Naive thymus-derived CD4-positive, alpha-beta T cell (primary cell): ENCODE measurements at regions of chr15 and their contacts with region 1.

Region 1: GRCh38 chr15:58628206-58628947 is 121.1 kb downstream of the ADAM10 start:
- DNase-seq: peak in 6 of 9 donors; percentile 14 to 44 (median 21)
- ATAC-seq: peak; percentile 70
- H3K4me3 ChIP-seq: peak overlapping the region; percentile 67
- H3K4me3 Mint-ChIP-seq: peak overlapping the region; percentile 64 to 92 (median 87)
- H3K27ac ChIP-seq: peak overlapping the region; percentile 86
- H3K27ac Mint-ChIP-seq: peak overlapping the region; percentile 92 to 100 (median 96)
- H3K4me1 ChIP-seq: peaks cover 19% of the 10 kb centered on the region in 2 donors
- H3K4me1 Mint-ChIP-seq: peaks cover 32 to 67% (median 58%) of the 10 kb centered on the region in 7 donors
- H3K27me3 ChIP-seq: no peaks in the 10 kb centered on the region
- H3K27me3 Mint-ChIP-seq: no peaks in the 10 kb centered on the region

Region 2: GRCh38 chr15:58269455-58270414 is 358.6 kb before region 1 on chr15:
- CTCF ChIA-PET with region 1: no interaction called
- POLR2A ChIA-PET with region 1: no interaction called
- intact Hi-C with region 1: loop called in 1 of 2 experiments (anchors 10 kb)
- DNase-seq: peak in 7 of 9 donors; percentile 13 to 56 (median 37)
- ATAC-seq: peak; percentile 81
- H3K4me3 ChIP-seq: no peak overlapping the region
- H3K4me3 Mint-ChIP-seq: no peak overlapping the region
- H3K27ac ChIP-seq: no peak overlapping the region
- H3K27ac Mint-ChIP-seq: peak overlapping the region in 5 of 9 donors; percentile 10 to 78 (median 52)
- H3K4me1 ChIP-seq: peaks cover 0 to 5% of the 10 kb centered on the region in 2 donors
- H3K4me1 Mint-ChIP-seq: peaks cover 6 to 14% (median 13%) of the 10 kb centered on the region in 7 donors
- H3K27me3 ChIP-seq: no peaks in the 10 kb centered on the region
- H3K27me3 Mint-ChIP-seq: peaks cover 0 to 6% (median 0%) of the 10 kb centered on the region in 5 donors

Region 3: GRCh38 chr15:58457381-58457965 is 170.9 kb before region 1 on chr15:
- CTCF ChIA-PET with region 1: no interaction called
- POLR2A ChIA-PET with region 1: no interaction called
- intact Hi-C with region 1: loop called in 1 of 2 experiments (anchors 5 kb)
- DNase-seq: no peak
- ATAC-seq: no peak
- H3K4me3 ChIP-seq: no peak overlapping the region
- H3K4me3 Mint-ChIP-seq: peak overlapping the region in 1 of 10 donors; percentile 47
- H3K27ac ChIP-seq: no peak overlapping the region
- H3K27ac Mint-ChIP-seq: peak overlapping the region in 2 of 9 donors; percentile 16 to 78
- H3K4me1 ChIP-seq: peaks cover 11 to 23% of the 10 kb centered on the region in 2 donors
- H3K4me1 Mint-ChIP-seq: peaks cover 19 to 75% (median 49%) of the 10 kb centered on the region in 7 donors
- H3K27me3 ChIP-seq: no peaks in the 10 kb centered on the region
- H3K27me3 Mint-ChIP-seq: no peaks in the 10 kb centered on the region

Region 4: GRCh38 chr15:58611731-58612676 is 16.4 kb before region 1 on chr15:
- CTCF ChIA-PET with region 1: no interaction called
- POLR2A ChIA-PET with region 1: no interaction called
- intact Hi-C with region 1: loop called in 1 of 2 experiments (anchors 2 kb)
- DNase-seq: no peak
- ATAC-seq: no peak
- H3K4me3 ChIP-seq: no peak overlapping the region
- H3K4me3 Mint-ChIP-seq: no peak overlapping the region
- H3K27ac ChIP-seq: no peak overlapping the region
- H3K27ac Mint-ChIP-seq: peak overlapping the region in 1 of 9 donors; percentile 53
- H3K4me1 ChIP-seq: no peaks in the 10 kb centered on the region
- H3K4me1 Mint-ChIP-seq: peaks cover 9 to 67% (median 29%) of the 10 kb centered on the region in 7 donors
- H3K27me3 ChIP-seq: no peaks in the 10 kb centered on the region
- H3K27me3 Mint-ChIP-seq: no peaks in the 10 kb centered on the region

Region 5: GRCh38 chr15:58641660-58642059 is 13.3 kb after region 1 on chr15:
- CTCF ChIA-PET with region 1: no interaction called
- POLR2A ChIA-PET with region 1: interaction called, 5 read pairs
- intact Hi-C with region 1: loop called in 1 of 2 experiments (anchors 2 kb)
- DNase-seq: no peak
- ATAC-seq: no peak
- H3K4me3 ChIP-seq: no peak overlapping the region
- H3K4me3 Mint-ChIP-seq: no peak overlapping the region
- H3K27ac ChIP-seq: no peak overlapping the region
- H3K27ac Mint-ChIP-seq: peak overlapping the region in 7 of 9 donors; percentile 24 to 78 (median 53)
- H3K4me1 ChIP-seq: no peaks in the 10 kb centered on the region
- H3K4me1 Mint-ChIP-seq: peaks cover 7 to 19% (median 17%) of the 10 kb centered on the region in 7 donors
- H3K27me3 ChIP-seq: no peaks in the 10 kb centered on the region
- H3K27me3 Mint-ChIP-seq: no peaks in the 10 kb centered on the region

Region 6: DNA sequence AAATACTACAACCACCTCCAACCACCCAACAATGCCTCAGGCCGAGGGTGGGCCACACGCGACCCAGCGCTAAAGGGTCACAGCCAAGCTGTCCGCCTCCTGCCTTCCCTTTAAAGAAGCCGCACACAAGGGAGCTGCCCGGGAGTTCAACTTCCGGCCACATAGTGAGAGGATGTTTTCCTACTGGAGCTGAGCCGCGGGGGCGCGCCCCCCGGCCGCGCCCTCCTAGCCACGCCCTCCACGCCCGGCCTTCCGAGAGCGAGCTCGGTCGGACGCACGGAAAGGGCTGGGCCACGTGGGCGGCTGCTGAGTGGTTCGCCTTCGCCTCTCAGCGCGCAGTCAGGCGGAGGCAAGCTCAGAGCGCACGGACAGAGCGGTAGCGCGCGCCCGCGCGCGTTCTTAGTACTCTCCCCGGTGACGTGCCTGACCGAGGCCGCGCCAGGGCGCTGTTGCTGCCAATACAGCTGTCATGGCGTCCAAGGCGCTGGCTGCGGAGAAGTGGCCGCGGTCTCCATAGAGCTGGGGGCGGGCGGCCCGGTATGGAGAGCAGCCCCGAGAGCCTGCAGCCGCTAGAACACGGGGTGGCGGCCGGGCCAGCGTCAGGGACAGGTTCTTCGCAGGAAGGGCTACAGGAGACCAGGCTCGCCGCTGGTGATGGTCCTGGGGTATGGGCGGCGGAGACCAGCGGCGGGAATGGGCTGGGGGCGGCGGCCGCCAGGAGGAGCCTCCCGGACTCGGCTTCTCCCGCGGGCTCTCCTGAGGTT is 142.7 kb after region 1 on chr15 and contains the start of gene MINDY2:
- CTCF ChIA-PET with region 1: no interaction called
- POLR2A ChIA-PET with region 1: interaction called, 3 read pairs
- intact Hi-C with region 1: loop called in 1 of 2 experiments (anchors 1 kb)
- DNase-seq: peak; percentile 85 to 92 (median 90)
- ATAC-seq: peak; percentile 98
- H3K4me3 ChIP-seq: peak within 1 kb of the TSS; percentile 83
- H3K4me3 Mint-ChIP-seq: peak within 1 kb of the TSS in 2 of 10 donors; percentile 2 to 20
- H3K27ac ChIP-seq: peak within 1 kb of the TSS; percentile 90
- H3K27ac Mint-ChIP-seq: peak within 1 kb of the TSS in 7 of 9 donors; percentile 86 to 96 (median 93)
- H3K4me1 ChIP-seq: peaks cover 24 to 32% of the 10 kb centered on the region in 2 donors
- H3K4me1 Mint-ChIP-seq: peaks cover 0 to 21% (median 9%) of the 10 kb centered on the region in 7 donors
- H3K27me3 ChIP-seq: no peaks in the 10 kb centered on the region
- H3K27me3 Mint-ChIP-seq: no peaks in the 10 kb centered on the region
- total RNA-seq, gene MINDY2: 10.4 to 16.6 (median 11.5) TPM